ENCODE measurements at regions of chrX and their contacts with region 1.

Region 1: DNA sequence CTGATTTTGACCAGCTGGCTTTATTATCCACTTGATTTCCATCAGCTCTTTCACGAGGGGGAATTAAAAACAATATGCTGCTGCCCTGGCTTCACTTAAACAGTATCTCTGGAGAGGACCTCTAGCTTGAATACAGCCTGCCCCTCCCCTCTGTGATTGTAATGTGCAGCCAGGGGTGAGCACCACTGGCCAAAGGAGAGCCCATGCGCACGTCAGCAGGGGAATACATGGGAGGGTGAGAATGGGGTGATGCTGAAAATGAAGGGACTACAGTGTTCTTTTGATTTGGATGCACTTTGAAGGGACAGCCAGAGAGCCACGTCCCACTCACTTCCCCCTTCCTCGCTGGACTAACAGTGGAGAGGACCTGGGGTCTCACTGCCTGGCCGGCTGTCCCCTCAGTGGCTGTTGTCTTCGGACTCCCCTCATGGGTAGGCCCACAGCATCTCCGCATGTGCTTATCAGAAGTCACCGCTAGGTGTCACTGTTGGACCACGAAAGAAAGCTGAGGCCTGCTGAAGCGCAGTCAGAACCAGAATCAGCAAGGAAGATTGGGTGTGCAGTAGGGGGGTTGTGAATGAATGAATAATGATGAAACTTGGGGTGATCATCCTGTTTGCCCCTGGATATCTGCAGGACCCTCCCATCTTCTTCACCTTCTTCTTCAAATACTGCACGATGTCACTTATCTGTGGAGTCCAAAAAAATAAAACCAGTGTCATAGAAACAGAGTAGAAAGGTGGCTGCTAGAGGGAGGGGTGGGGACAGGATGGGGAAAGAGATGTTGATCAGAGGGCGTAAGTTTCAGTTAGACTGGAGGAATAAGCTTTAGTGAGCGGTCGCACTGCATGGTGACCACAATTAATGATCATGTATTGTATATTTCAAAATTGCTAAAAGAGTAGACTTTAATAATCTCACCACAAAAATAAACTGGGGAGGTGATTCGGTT is 32.8 kb downstream of the CLCN4 start:
- DNase-seq: peak; percentile 90
- ATAC-seq: peak; percentile 91

Region 2: DNA sequence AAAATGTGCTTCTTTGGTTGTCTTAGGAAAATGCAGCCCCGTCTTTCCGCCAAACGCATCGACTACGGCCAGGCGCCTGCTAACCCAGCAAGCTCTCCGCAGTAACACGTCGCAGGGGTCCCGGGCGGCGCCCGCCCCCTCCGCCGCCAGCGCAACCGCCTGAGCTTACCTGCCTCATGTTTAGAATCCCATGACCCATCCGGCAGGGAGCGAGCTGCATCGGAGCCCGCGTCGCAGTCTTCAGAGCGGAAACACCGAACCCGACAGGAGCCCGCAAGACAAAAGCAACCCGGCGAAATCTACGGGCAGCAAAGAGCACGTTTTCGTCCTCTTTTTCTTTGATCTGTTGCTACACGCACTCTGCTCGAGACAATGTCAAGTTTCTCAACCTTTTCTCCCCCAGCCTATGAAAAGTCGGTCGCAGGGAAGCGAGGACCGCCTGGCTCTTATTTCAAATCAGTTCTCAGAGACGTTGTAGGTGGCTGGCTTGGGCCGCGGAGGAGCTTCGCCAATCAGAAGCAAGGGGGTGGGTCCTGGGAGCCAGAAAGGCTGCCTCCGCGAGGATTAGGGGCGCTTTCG is 430.6 kb after region 1 on chrX and contains the start of gene MID1:
- intact Hi-C with region 1: loop called (anchors 10 kb)
- DNase-seq: peak; percentile 80
- ATAC-seq: peak; percentile 93
- total RNA-seq, gene MID1: 33.0 TPM

Region 3: DNA sequence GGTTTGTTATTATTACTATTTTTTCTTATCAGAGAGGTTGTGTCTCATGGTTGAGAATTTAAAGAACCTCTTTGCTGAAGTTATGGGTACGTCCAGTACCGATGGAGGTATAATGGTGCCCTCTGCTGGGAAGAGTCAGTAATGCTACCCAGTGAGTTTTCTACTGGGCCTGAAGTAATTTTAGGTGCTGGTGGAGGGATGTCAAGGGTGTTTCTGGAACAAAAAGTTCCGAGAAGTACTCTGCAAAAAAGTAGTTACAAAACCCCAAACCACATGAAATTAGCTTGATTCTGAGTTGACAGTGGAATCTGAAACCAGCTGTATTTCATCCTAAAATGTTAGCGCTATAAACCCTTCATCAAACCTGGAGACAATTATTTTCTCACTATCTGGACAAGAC is 533.3 kb after region 1 on chrX:
- intact Hi-C with region 1: loop called (anchors 10 kb)
- DNase-seq: peak; percentile 79
- ATAC-seq: peak; percentile 93

Region 4: DNA sequence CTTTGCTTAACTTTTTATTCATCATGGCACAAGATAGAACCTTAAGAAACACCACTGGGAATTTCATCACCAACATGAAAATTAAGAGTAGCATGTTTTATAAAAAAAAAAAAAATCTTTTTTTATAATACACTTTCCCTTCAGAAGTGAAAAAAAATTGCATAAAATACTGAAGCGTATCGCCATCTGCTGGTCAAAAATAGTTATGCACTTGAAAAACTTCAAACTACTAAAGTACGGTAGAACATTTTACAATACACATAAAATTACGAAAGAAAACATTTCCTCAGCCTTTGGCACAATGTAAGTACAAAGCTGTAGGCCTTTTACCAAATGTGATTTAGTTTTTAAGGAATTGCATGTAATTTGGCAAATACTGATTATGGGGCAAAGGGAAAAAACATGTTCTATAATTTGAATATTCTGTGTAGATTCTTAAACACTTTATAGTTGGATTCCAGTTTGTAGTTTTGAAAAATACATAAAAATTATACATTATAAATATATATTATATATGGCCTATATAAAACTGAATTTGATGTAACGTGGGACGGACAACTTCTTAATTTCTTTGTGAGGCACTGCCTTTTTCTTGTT is 948.0 kb after region 1 on chrX:
- intact Hi-C with region 1: loop called (anchors 5 kb)
- DNase-seq: no peak
- ATAC-seq: no peak